ENCODE measurements at regions of chr6 and their contacts with region 1.

Region 1: DNA sequence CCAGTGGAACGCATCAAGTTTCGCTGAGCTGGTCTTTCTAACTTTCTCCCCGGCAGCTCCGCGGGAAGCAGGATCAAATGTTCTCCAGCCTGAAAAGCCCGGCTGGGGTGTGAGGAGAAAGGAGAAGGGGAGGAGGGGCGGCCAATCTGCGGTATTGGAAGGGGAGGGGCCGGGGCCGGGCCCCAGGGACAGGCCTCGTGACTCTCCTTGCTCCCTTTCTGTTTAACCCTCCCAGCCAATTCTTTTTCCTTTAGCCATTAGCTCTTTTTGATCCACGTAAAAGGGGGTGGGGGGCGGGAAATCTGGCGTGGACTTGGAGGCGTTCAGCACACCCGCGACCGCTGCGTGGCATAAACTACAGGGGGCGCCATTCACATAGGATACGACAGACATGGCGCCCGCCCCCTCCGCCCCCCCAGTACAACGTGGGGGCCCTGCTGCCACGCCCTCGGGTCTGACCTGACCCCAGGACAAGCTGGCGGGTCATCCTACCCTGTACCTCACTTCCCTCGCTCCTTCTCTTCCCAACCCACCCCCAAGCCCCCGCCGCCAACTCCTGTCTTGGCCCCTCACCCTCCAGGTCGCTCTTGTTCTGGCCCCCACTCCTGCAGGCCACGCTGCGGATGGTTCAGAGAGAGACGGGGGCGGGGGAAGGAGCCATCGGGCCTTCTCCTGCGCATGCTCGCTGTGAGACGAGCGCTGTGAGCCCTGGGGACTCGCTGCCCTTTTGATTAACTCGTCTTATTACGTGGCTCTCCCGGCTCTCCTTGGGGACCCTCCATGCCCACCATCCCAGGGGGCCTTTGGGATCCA is 7.8 kb upstream of the MDGA1 start:
- DNase-seq: peak; percentile 37 to 82 (median 78)
- ATAC-seq: peak; percentile 86
- H3K4me3 ChIP-seq: peak overlapping the region; percentile 60
- H3K4me3 Mint-ChIP-seq: peak overlapping the region; percentile 79 to 90 (median 86)
- H3K27ac ChIP-seq: peak overlapping the region; percentile 46
- H3K27ac Mint-ChIP-seq: peak overlapping the region; percentile 55 to 91 (median 82)
- H3K4me1 ChIP-seq: peaks cover 5 to 6% of the 10 kb centered on the region in 2 donors
- H3K4me1 Mint-ChIP-seq: peaks cover 10 to 17% (median 14%) of the 10 kb centered on the region in 7 donors
- H3K27me3 ChIP-seq: no peaks in the 10 kb centered on the region
- H3K27me3 Mint-ChIP-seq: peaks cover 0 to 39% (median 0%) of the 10 kb centered on the region in 5 donors

Region 2: GRCh38 chr6:37222125-37222967 is 483.1 kb before region 1 on chr6:
- CTCF ChIA-PET with region 1: no interaction called
- POLR2A ChIA-PET with region 1: no interaction called
- intact Hi-C with region 1: no loop called
- DNase-seq: peak; percentile 45 to 74 (median 66)
- ATAC-seq: peak; percentile 94
- H3K4me3 ChIP-seq: peak overlapping the region; percentile 60
- H3K4me3 Mint-ChIP-seq: peak overlapping the region; percentile 77 to 91 (median 86)
- H3K27ac ChIP-seq: peak overlapping the region; percentile 47
- H3K27ac Mint-ChIP-seq: peak overlapping the region in 7 of 9 donors; percentile 13 to 76 (median 68)
- H3K4me1 ChIP-seq: peaks cover 4% of the 10 kb centered on the region in 2 donors
- H3K4me1 Mint-ChIP-seq: peaks cover 12 to 38% (median 13%) of the 10 kb centered on the region in 7 donors
- H3K27me3 ChIP-seq: no peaks in the 10 kb centered on the region
- H3K27me3 Mint-ChIP-seq: no peaks in the 10 kb centered on the region

Region 3: GRCh38 chr6:37514377-37514776 is 191.1 kb before region 1 on chr6:
- CTCF ChIA-PET with region 1: no interaction called
- POLR2A ChIA-PET with region 1: no interaction called
- intact Hi-C with region 1: no loop called
- DNase-seq: peak in 1 of 9 donors; percentile 51
- ATAC-seq: no peak
- H3K4me3 ChIP-seq: peak overlapping the region; percentile 55
- H3K4me3 Mint-ChIP-seq: peak overlapping the region; percentile 75 to 93 (median 84)
- H3K27ac ChIP-seq: peak overlapping the region; percentile 97
- H3K27ac Mint-ChIP-seq: peak overlapping the region; percentile 92 to 99 (median 97)
- H3K4me1 ChIP-seq: peaks cover 70 to 81% of the 10 kb centered on the region in 2 donors
- H3K4me1 Mint-ChIP-seq: peaks cover 59 to 98% (median 95%) of the 10 kb centered on the region in 7 donors
- H3K27me3 ChIP-seq: no peaks in the 10 kb centered on the region
- H3K27me3 Mint-ChIP-seq: no peaks in the 10 kb centered on the region

Region 4: DNA sequence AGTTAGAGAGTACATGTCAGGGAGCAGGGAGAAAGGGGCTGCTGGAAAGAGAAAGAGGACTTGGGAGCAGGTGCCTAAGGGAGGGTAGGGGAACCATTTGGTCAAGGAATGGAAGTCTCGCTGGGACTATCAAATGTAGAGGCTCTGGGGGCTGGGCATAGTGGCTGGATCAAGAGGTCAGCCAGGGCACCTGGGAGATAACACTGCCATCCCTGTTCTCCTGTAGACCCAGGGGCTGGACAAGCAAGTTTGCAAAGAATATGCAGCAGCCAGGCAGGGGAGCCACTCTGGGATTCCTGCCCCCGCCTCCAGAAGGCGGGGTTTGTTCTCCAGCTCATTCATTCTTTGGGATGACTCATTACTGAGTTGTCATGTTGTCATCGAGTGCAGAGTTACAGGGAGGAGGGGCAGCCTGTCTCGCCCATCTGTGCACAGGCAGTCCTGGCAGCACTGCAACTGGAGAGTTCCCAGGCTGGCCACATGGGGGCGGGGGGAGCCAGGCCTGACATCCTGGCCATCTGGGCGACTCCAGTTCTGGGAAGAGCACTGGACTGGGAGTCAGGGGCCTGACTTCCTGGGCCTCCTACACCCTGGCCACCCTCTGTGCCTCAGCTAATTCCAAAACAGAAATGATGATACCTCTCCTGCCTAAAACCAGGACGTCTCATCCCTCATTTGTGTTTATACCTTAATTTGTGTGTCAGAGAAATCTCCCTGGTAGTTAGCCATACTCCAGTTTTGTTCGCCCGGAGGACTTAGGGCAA is 85.9 kb after region 1 on chr6:
- CTCF ChIA-PET with region 1: no interaction called
- POLR2A ChIA-PET with region 1: interaction called, 4 read pairs
- intact Hi-C with region 1: loop called in 1 of 2 experiments (anchors 2 kb)
- DNase-seq: peak; percentile 29 to 83 (median 59)
- ATAC-seq: peak; percentile 99
- H3K4me3 ChIP-seq: no peak overlapping the region
- H3K4me3 Mint-ChIP-seq: no peak overlapping the region
- H3K27ac ChIP-seq: no peak overlapping the region
- H3K27ac Mint-ChIP-seq: no peak overlapping the region
- H3K4me1 ChIP-seq: no peaks in the 10 kb centered on the region
- H3K4me1 Mint-ChIP-seq: peaks cover 0 to 11% (median 0%) of the 10 kb centered on the region in 7 donors
- H3K27me3 ChIP-seq: no peaks in the 10 kb centered on the region
- H3K27me3 Mint-ChIP-seq: peaks cover 0 to 10% (median 0%) of the 10 kb centered on the region in 5 donors